ENCODE measurements at regions of chr14 and their contacts with region 1.

Region 1: DNA sequence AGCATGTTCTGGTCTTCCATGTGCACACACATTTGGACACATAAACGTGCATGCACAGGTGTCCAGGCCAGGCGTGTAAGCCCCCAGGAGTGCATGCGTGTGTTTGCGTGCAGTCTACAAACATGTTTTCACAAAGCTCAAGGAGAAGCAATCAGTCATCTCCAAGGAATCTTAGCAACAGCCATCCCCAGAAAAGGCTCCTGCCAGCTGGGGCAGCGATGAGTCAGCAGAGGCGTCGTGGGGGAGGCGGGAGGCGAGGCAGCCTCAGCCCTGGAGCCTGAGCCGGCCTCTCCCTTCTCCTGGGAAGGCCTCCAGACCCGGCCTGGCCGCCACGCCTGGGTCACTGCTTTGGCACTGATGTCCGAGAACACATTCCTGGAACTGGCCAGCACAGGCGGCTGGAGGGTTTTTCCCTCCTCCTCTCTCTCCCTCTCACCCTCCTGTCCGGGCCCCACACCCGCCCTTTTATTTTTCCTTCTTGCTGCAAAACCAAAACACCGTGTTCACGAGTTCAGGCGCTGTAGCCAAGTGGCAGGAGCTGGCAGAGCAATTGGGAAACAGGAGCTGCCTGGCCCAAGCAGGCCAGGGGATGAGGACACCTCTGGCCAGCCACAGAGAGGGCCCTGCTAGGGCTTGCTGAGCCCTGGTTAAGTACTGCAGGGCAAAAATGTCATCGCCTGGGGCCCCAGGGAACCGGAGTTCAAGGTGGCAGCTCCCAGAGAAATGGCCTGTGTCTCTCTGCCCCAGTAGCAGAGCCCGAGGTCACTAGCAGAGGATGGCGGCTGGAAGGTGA is 92.7 kb downstream of the LRRC74A start:
- DNase-seq: peak; percentile 96
- H3K4me3 ChIP-seq: no peak overlapping the region
- H3K27ac ChIP-seq: peak overlapping the region; percentile 69 to 77
- H3K4me1 ChIP-seq: peaks cover 59% of the 10 kb centered on the region
- H3K27me3 ChIP-seq: no peaks in the 10 kb centered on the region
- CTCF ChIP-seq: no peak
- POLR2A ChIP-seq: no peak

Region 2: GRCh38 chr14:76848890-76849289 is 70.1 kb before region 1 on chr14:
- intact Hi-C with region 1: no loop called
- DNase-seq: no peak
- H3K4me3 ChIP-seq: no peak overlapping the region
- H3K27ac ChIP-seq: no peak overlapping the region
- H3K4me1 ChIP-seq: no peaks in the 10 kb centered on the region
- H3K27me3 ChIP-seq: no peaks in the 10 kb centered on the region
- CTCF ChIP-seq: no peak
- POLR2A ChIP-seq: no peak

Region 3: GRCh38 chr14:77040059-77040740 is 121.3 kb after region 1 on chr14:
- intact Hi-C with region 1: loop called (anchors 5 kb)
- DNase-seq: peak; percentile 99
- H3K4me3 ChIP-seq: peak overlapping the region; percentile 37 to 48
- H3K27ac ChIP-seq: peak overlapping the region; percentile 87 to 92
- H3K4me1 ChIP-seq: peaks cover 82% of the 10 kb centered on the region
- H3K27me3 ChIP-seq: no peaks in the 10 kb centered on the region
- CTCF ChIP-seq: no peak
- POLR2A ChIP-seq: no peak

Region 4: GRCh38 chr14:77097700-77098528 is 179.0 kb after region 1 on chr14 and contains the start of gene CIPC:
- intact Hi-C with region 1: no loop called
- DNase-seq: peak; percentile 100
- H3K4me3 ChIP-seq: peak within 1 kb of the TSS; percentile 83 to 97
- H3K27ac ChIP-seq: peak within 1 kb of the TSS; percentile 98
- H3K4me1 ChIP-seq: peaks cover 31% of the 10 kb centered on the region
- H3K27me3 ChIP-seq: no peaks in the 10 kb centered on the region
- CTCF ChIP-seq: peak in 2 of 3 experiments; percentile 28
- POLR2A ChIP-seq: peak; percentile 78
- total RNA-seq, gene CIPC: 44.5 to 48.3 TPM